Transverse colon (tissue), 4 donors: ENCODE measurements at regions of chr15 and their contacts with region 1.

Region 1: GRCh38 chr15:42650208-42651066 is 75.0 kb downstream of the STARD9 start:
- DNase-seq: peak; percentile 67
- H3K4me3 ChIP-seq: no peak overlapping the region
- H3K27ac ChIP-seq: no peak overlapping the region
- H3K4me1 ChIP-seq: peaks cover 0 to 6% (median 0%) of the 10 kb centered on the region in 4 donors
- H3K27me3 ChIP-seq: no peaks in the 10 kb centered on the region
- CTCF ChIP-seq: peak; percentile 66 to 77 (median 72)
- EP300 ChIP-seq: no peak
- POLR2A ChIP-seq: no peak

Region 2: GRCh38 chr15:42548253-42549031 is 102.0 kb before region 1 on chr15 and contains the starts of genes HAUS2 and LRRC57:
- in situ Hi-C with region 1: loop called in 1 of 4 experiments (anchors 25 kb)
- intact Hi-C with region 1: loop called (anchors 10 kb)
- DNase-seq: peak; percentile 94
- H3K4me3 ChIP-seq: peak within 1 kb of the TSS; percentile 65 to 94 (median 76)
- H3K27ac ChIP-seq: peak within 1 kb of the TSS; percentile 91 to 98 (median 93)
- H3K4me1 ChIP-seq: peaks cover 4 to 40% (median 21%) of the 10 kb centered on the region in 4 donors
- H3K27me3 ChIP-seq: no peaks in the 10 kb centered on the region
- CTCF ChIP-seq: peak in 1 of 5 experiments; percentile 34
- EP300 ChIP-seq: no peak
- POLR2A ChIP-seq: peak; percentile 95
- total RNA-seq, gene HAUS2: 10.6 to 27.5 (median 13.6) TPM
- total RNA-seq, gene LRRC57: 12.3 to 42.4 (median 28.7) TPM

Region 3: DNA sequence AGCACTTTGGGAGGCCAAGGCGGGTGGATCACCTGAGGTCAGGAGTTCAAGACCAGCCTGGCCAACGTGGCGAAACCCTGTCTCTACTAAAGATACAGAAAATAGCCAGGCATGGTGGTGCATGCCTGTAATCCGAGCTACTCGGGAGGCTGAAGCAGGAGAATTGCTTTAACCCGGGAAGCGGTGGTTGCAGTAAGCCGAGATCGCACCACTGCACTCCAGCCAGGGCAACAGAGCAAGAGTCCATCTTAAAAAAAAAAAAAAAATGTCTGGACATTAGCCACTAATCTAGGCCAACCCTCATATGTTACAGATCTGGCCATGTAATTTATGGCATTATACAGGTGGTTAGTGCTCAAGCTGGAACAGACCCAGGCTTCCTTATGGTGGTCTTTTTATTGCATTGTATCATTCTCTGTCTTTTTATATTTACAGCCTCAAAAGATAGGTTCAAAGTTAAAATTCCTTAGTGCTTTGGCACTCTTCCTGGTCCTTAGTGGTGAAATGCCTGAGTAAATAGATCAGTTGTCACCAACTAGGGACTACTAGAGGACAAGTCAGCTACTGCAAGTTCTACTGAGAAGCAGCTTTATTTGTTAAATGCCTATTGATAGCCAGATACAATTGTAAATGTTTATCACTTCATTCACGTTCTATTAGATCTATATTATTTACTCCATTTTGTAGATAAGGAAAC is 59.1 kb before region 1 on chr15:
- in situ Hi-C with region 1: loop called in 1 of 4 experiments (anchors 10 kb)
- intact Hi-C with region 1: no loop called
- DNase-seq: no peak
- H3K4me3 ChIP-seq: no peak overlapping the region
- H3K27ac ChIP-seq: peak overlapping the region; percentile 53 to 81 (median 78)
- H3K4me1 ChIP-seq: peaks cover 5 to 40% (median 26%) of the 10 kb centered on the region in 4 donors
- H3K27me3 ChIP-seq: no peaks in the 10 kb centered on the region
- CTCF ChIP-seq: peak; percentile 29 to 63 (median 45)
- EP300 ChIP-seq: no peak
- POLR2A ChIP-seq: no peak